ENCODE measurements at regions of chr4 and their contacts with region 1.

Region 1: DNA sequence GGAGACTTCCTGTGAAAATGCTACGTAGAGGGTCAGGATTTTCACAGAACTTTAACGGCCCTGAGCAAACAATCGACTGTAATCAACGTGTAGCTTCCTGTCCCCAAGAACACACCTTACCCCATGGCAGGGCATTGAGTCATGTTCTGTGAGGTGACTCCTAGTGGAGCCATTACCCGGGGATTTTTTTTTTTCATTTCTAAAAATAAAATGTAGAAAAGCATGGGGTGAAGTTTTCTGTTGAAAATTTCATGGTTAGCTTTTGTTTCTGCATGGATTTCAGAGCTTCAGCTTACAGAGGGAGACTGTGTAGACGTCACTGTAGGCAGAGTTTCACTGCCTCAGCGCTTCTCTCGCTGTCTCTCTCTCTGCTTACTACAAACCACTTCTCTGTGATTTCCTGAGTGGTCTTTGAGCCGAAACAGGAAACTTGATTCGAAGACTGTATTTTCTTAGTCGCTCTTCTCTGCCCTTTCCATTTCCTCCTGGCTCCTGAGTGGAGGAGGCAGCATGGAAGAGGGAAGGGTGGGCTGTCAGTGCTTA is 111.7 kb downstream of the NFKB1 start:
- DNase-seq: peak in 9 of 10 donors; percentile 21 to 81 (median 60)
- ATAC-seq: peak; percentile 83 to 92
- H3K4me3 Mint-ChIP-seq: peak overlapping the region; percentile 78 to 97 (median 86)
- H3K27ac Mint-ChIP-seq: peak overlapping the region; percentile 96 to 100 (median 97)
- H3K4me1 Mint-ChIP-seq: peaks cover 35 to 84% (median 75%) of the 10 kb centered on the region in 4 donors
- H3K27me3 Mint-ChIP-seq: no peaks in the 10 kb centered on the region

Region 2: GRCh38 chr4:102580463-102580842 is 32.4 kb before region 1 on chr4:
- POLR2A ChIA-PET with region 1: no interaction called
- DNase-seq: no peak
- ATAC-seq: no peak
- H3K4me3 Mint-ChIP-seq: peak overlapping the region in 1 of 10 donors; percentile 10
- H3K27ac Mint-ChIP-seq: peak overlapping the region in 8 of 10 donors; percentile 18 to 86 (median 78)
- H3K4me1 Mint-ChIP-seq: peaks cover 37 to 54% (median 49%) of the 10 kb centered on the region in 4 donors
- H3K27me3 Mint-ChIP-seq: no peaks in the 10 kb centered on the region

Region 3: GRCh38 chr4:102632241-102633065 is 19.6 kb after region 1 on chr4:
- POLR2A ChIA-PET with region 1: interaction called, 11 read pairs
- DNase-seq: no peak
- ATAC-seq: no peak
- H3K4me3 Mint-ChIP-seq: peak overlapping the region in 2 of 10 donors; percentile 60 to 72
- H3K27ac Mint-ChIP-seq: peak overlapping the region; percentile 74 to 98 (median 96)
- H3K4me1 Mint-ChIP-seq: peaks cover 22 to 57% (median 51%) of the 10 kb centered on the region in 4 donors
- H3K27me3 Mint-ChIP-seq: no peaks in the 10 kb centered on the region

Measured in naive thymus-derived CD8-positive, alpha-beta T cell (primary cell).